Ascending aorta (tissue), 2 donors: ENCODE measurements at regions of chr16 and their contacts with region 1.

Region 1: DNA sequence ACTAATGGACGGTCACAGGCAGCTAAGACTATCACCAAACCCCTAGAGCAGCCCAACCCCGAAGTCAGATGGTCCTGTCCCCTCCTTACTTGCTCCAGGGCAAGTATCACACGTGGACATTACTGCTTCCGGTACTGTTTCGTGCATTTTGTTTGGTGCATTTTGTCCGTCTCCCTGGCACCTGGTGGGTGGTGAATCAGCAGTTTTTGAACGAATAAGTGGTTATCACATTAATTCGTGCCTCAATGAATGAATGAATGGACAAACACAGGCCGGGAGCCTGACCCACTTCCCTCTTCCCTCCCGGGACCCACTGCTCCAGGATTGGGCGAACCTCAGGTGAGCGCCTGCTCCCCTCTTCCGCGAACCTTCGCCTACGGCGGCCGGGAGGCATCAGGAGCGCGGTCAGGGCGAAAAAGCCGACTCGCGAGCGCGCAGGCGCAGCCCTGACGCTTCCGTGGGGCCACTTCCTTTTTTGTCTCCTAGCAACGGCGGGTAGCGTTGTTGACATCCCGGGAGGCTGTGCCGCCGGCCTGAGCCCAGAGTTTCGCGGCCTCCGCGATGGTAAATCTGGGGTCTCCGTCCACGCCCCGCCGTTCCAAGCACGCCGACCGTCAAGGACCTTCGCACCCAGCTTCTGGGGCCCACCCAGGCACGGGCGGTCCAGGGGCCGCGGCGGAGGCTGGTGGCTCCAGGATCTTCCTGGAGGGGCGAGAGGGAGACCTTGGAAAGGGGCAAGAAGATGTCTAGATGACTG is at the start of gene DYNLRB2:
- DNase-seq: peak; percentile 56 to 94
- H3K4me3 ChIP-seq: peak within 1 kb of the TSS; percentile 81
- H3K27ac ChIP-seq: peak within 1 kb of the TSS; percentile 51 to 60
- H3K4me1 ChIP-seq: no peaks in the 10 kb centered on the region
- H3K27me3 ChIP-seq: no peaks in the 10 kb centered on the region
- CTCF ChIP-seq: no peak
- total RNA-seq, gene DYNLRB2: not detected

Region 2: DNA sequence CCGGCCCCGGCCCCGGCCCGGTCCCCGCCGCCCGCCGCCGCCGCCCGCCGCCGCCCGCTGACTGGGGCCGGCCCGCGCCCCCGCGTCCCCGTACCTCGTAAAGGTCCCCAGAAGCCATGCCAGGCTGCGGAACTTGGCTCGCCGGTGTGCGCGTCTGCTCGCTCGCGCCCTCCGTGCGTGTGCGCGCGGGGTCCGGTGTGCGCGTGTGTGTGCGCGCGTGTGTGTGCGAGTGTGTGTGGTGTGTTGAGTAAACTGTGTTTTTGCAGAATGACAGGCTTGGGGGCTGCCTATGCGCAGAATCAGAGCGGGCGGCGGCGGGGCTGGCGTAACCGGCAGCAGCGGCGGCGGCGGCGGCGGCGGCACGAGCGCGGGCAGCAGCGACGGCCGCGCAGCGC is 263.4 kb after region 1 on chr16:
- intact Hi-C with region 1: loop called (anchors 5 kb)
- DNase-seq: peak in 1 of 2 donors; percentile 66
- H3K4me3 ChIP-seq: peak overlapping the region; percentile 70 to 77
- H3K27ac ChIP-seq: no peak overlapping the region
- H3K4me1 ChIP-seq: no peaks in the 10 kb centered on the region
- H3K27me3 ChIP-seq: no peaks in the 10 kb centered on the region
- CTCF ChIP-seq: no peak

Region 3: GRCh38 chr16:81314603-81315270 is 774.0 kb after region 1 on chr16 and contains the start of gene GAN:
- intact Hi-C with region 1: loop called (anchors 2 kb)
- DNase-seq: peak; percentile 88 to 96
- H3K4me3 ChIP-seq: peak within 1 kb of the TSS; percentile 88 to 95
- H3K27ac ChIP-seq: peak within 1 kb of the TSS; percentile 88 to 91
- H3K4me1 ChIP-seq: peaks cover 0 to 16% of the 10 kb centered on the region in 2 donors
- H3K27me3 ChIP-seq: no peaks in the 10 kb centered on the region
- CTCF ChIP-seq: no peak
- total RNA-seq, gene GAN: 2.6 TPM